HAP-1 (cell line): ENCODE measurements at regions of chr1 and their contacts with region 1.

Region 1: GRCh38 chr1:39609618-39610331 is 29.7 kb downstream of the HEYL start:
- DNase-seq: peak; percentile 76 to 91
- H3K4me3 ChIP-seq: no peak overlapping the region
- H3K4me1 ChIP-seq: no peaks in the 10 kb centered on the region
- H3K27me3 ChIP-seq: no peaks in the 10 kb centered on the region

Region 2: GRCh38 chr1:39317910-39318633 is 291.7 kb before region 1 on chr1:
- in situ Hi-C with region 1: no loop called
- DNase-seq: no peak
- H3K4me3 ChIP-seq: no peak overlapping the region
- H3K4me1 ChIP-seq: no peaks in the 10 kb centered on the region
- H3K27me3 ChIP-seq: no peaks in the 10 kb centered on the region

Region 3: DNA sequence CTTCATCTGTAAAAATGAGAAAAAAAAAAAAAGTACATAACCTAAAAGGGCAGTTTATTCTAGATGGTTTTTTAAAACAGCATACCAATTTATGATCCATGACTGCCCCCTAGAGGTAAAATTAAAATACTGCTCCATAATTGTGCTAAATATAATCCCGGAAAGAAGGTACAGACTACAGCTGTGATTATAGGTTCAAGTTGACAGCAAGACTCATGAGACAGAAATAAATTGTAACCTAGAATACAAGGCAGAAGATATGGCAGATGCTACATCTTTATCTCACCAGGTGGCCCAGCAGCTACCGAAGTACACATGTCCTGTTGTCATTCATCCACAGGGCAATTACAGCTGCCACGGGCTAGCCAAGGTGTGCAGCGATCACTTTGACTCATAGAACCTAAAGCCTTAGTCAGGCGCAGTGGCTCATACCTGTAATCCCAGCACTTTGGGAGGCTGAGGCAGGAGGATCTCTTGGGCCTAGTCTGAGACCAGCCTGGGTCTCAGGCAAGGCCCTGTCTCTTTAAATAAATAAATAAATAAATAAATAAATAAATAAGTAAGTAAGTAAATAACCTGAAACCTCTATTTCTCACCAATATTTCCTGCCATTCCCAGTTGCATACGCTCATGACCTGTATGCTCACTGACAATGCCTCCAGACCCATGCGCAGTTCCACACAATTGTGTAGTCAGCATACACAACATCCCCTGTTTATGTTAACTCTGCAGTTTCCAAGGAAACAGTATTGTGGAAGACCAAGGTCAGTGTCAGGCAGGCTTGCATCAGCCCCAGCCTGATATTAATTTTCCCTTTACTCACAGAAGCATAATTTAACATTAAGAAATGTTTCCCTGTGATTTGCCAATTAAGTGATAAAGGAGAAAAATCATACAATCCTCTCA is 110.6 kb after region 1 on chr1:
- in situ Hi-C with region 1: loop called (anchors 10 kb)
- DNase-seq: peak in 1 of 2 experiments; percentile 73
- H3K4me3 ChIP-seq: no peak overlapping the region
- H3K4me1 ChIP-seq: no peaks in the 10 kb centered on the region
- H3K27me3 ChIP-seq: peaks cover 45% of the 10 kb centered on the region

Region 4: DNA sequence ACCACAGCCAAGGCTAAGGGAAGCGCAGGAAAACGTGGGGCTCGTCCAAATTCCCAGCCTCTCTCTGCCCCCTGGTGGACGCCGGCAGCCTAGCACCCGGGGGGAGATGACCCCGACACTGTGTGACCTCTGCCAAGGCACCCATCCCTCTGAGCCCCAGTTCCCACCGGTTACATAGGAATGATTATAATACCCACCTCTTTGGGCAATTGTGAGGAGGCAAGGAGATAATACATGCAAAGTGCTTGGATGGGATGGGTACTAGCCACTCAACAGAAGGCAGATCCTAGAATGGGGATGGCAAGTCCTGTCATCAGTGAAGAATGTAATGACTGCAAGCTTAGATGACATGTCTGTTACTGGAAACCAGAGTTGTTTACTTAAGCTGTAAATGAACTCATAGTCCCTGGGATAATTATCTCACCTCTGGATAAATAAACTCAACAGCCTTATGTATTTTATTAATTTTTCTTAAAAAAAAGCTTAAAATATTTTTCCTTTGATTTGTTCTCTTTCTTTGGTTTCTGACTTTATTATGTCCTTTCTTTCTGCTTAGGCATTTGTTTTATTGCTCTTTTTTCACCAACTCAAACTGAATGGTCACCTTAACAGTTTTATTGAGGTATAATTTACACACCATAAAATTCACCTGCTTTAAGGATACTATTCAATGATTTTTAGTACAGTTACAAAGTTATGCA is 190.1 kb after region 1 on chr1:
- in situ Hi-C with region 1: loop called (anchors 10 kb)
- DNase-seq: peak; percentile 43 to 90
- H3K4me3 ChIP-seq: no peak overlapping the region
- H3K4me1 ChIP-seq: peaks cover 8% of the 10 kb centered on the region
- H3K27me3 ChIP-seq: no peaks in the 10 kb centered on the region